Right ventricle myocardium inferior (tissue), 1 donor: ENCODE measurements at regions of chr3 and their contacts with region 1.

Region 1: GRCh38 chr3:192467230-192468140 is 259.9 kb downstream of the FGF12 start:
- DNase-seq: no peak
- ATAC-seq: peak; percentile 74

Region 2: DNA sequence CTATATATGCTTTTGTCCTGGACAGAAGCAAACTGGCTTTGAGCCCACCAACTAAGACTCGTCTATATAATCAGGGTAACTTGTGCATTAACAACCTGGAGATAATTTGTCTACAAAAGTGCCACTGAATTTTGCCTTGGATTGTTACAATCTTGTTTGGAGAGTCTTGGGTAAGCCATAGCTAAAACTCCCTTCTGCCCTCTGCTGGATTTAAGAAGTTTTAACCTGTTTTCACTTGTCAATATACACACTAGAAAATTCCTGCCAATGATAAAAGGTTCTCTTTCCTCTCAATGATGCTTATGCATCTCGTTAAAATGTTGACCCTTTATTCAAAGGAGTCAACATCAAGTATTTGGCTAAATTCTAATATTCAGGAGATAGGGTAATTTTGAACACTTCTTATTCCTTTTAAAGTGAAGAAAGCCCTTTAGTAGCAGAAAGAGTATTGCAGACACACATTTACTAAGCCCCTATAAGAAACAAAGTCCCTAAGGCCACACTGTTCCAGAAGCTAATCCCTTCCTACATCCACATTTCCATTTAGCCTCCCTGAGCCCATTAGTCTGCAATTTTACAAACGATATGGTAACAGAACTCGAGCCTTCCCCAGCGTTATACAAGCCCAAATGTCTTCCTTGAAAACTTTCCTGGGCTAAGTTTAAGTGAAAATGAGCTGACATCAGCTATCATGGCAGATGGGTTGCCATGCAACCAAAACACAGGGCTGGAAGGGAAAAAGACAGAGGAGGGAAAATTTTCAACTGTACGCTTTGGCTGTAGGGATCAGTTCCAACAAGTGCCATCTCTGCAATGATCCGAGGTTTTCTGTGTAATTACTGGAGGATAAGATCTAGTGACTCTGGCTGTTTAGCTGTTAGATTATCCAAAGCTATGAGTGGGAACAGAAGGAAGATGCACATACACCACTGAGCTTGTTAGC is 335.7 kb after region 1 on chr3:
- intact Hi-C with region 1: loop called (anchors 1 kb)
- DNase-seq: no peak
- ATAC-seq: peak; percentile 63